IMR-90 (cell line): ENCODE measurements at regions of chr3 and their contacts with region 1.

Region 1: GRCh38 chr3:113838631-113839209 is at the start of gene GRAMD1C:
- DNase-seq: peak; percentile 88
- ATAC-seq: peak; percentile 98
- H3K4me3 ChIP-seq: peak within 1 kb of the TSS; percentile 95
- H3K27ac ChIP-seq: peak within 1 kb of the TSS; percentile 59; the same call in 1 of the 2 replicates
- H3K4me1 ChIP-seq: no peaks in the 10 kb centered on the region
- H3K27me3 ChIP-seq: no peaks in the 10 kb centered on the region
- CTCF ChIP-seq: peak; percentile 92
- POLR2A ChIP-seq: 0 out of 2 replicates have a peak, but pooled peaks have one; percentile 25
- RAD21 ChIP-seq: peak; percentile 75
- total RNA-seq, gene GRAMD1C: 5.0 and 9.4 TPM in 2 replicates

Region 2: GRCh38 chr3:113736548-113737089 is 102.1 kb before region 1 on chr3:
- CTCF ChIA-PET with region 1: interaction called, 3 read pairs
- POLR2A ChIA-PET with region 1: no interaction called
- dilution Hi-C with region 1: no loop called
- in situ Hi-C with region 1: no loop called
- intact Hi-C with region 1: loop called (anchors 1 kb)
- DNase-seq: peak; percentile 73
- ATAC-seq: peak; percentile 83
- H3K4me3 ChIP-seq: no peak overlapping the region
- H3K27ac ChIP-seq: no peak overlapping the region
- H3K4me1 ChIP-seq: peaks cover 6% of the 10 kb centered on the region; the same call in 1 of the 2 replicates
- H3K27me3 ChIP-seq: no peaks in the 10 kb centered on the region
- CTCF ChIP-seq: peak; percentile 79
- POLR2A ChIP-seq: peak; percentile 27; the same call in 1 of the 2 replicates
- RAD21 ChIP-seq: peak; percentile 84

Region 3: DNA sequence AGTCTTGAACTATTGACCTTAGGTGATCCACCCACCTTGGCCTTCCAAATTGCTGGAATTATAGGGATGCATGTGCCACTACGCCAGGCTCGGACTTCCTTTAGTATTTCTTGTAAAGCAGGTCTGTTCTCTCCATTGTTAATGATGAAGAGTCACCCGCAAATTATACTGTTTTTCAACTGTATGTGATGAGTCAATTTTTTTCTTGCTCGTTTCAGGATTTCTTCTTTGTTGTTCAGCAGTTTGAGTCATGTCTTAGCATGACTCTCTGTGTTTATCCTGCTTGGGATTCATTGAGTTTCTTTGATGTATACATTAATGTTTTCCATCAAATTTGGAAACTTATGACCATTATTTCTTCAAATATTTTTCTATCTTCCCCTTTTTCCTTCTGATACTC is 28.8 kb after region 1 on chr3:
- CTCF ChIA-PET with region 1: no interaction called
- POLR2A ChIA-PET with region 1: no interaction called
- dilution Hi-C with region 1: no loop called
- in situ Hi-C with region 1: no loop called
- intact Hi-C with region 1: no loop called
- DNase-seq: peak; percentile 79
- ATAC-seq: peak; percentile 73
- H3K4me3 ChIP-seq: no peak overlapping the region
- H3K27ac ChIP-seq: no peak overlapping the region
- H3K4me1 ChIP-seq: peaks cover 3% of the 10 kb centered on the region; the same call in 1 of the 2 replicates
- H3K27me3 ChIP-seq: no peaks in the 10 kb centered on the region
- CTCF ChIP-seq: no peak
- POLR2A ChIP-seq: no peak
- RAD21 ChIP-seq: no peak

Region 4: GRCh38 chr3:114056130-114057010 is 217.7 kb after region 1 on chr3 and contains the starts of genes CCDC191 and QTRT2:
- CTCF ChIA-PET with region 1: no interaction called
- POLR2A ChIA-PET with region 1: no interaction called
- dilution Hi-C with region 1: no loop called
- in situ Hi-C with region 1: loop called (anchors 10 kb)
- intact Hi-C with region 1: loop called (anchors 5 kb)
- DNase-seq: peak; percentile 99
- ATAC-seq: peak; percentile 99
- H3K4me3 ChIP-seq: peak within 1 kb of the TSS; percentile 76
- H3K27ac ChIP-seq: peak within 1 kb of the TSS; percentile 70
- H3K4me1 ChIP-seq: no peaks in the 10 kb centered on the region
- H3K27me3 ChIP-seq: no peaks in the 10 kb centered on the region
- CTCF ChIP-seq: no peak
- POLR2A ChIP-seq: no peak; the same call in 1 of the 2 replicates
- RAD21 ChIP-seq: no peak
- total RNA-seq, gene CCDC191: 0.72 and 0.83 TPM in 2 replicates
- total RNA-seq, gene QTRT2: 15.6 and 20.3 TPM in 2 replicates